Mammary epithelial cell (primary cell): ENCODE measurements at regions of chr12 and their contacts with region 1.

Region 1: DNA sequence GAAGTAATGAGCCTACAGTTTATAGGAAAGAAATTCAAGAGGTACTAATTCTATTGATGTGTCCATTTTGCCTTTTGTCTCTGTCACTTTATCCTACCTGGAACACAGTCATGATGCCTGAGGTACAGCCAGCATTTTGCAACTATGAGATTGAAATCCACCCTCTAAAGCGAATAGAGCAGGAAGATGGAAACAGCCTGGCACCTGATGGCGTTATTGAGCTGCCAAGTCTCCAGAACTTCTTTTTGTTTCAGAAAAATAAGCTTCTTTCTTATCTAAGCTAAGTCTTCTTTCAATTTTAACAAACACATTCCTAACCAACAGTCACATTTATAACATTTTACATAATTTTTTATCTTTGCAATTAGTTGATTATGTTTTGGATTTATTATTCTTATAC is 182.2 kb downstream of the PAWR start:
- DNase-seq: no peak
- H3K4me3 ChIP-seq: no peak overlapping the region
- H3K27ac ChIP-seq: no peak overlapping the region
- H3K4me1 ChIP-seq: no peaks in the 10 kb centered on the region
- H3K27me3 ChIP-seq: no peaks in the 10 kb centered on the region
- CTCF ChIP-seq: peak in 1 of 2 donors; percentile 15

Region 2: DNA sequence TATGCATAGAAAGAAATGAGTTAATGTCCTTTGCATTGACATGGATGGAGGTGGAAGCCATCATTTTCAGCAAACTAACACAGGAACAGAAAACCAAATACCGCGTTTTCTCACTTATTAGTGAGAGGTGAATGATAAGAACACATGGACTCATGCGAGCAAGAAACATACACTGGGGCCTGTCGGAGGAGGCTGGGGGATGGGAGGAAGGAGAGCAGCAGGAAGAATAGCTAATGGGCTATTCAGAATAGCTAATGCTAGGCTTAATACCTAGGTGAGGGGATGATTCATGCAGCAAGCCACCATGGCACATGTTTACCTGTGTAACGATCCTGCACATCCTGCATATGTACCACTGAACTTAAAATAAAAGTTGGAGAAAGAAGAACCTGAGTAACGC is 673.1 kb before region 1 on chr12:
- CTCF ChIA-PET with region 1: no interaction called
- dilution Hi-C with region 1: no loop called
- in situ Hi-C with region 1: no loop called
- intact Hi-C with region 1: no loop called
- DNase-seq: no peak
- H3K4me3 ChIP-seq: no peak overlapping the region
- H3K27ac ChIP-seq: no peak overlapping the region
- H3K4me1 ChIP-seq: no peaks in the 10 kb centered on the region
- H3K27me3 ChIP-seq: no peaks in the 10 kb centered on the region
- CTCF ChIP-seq: no peak

Region 3: DNA sequence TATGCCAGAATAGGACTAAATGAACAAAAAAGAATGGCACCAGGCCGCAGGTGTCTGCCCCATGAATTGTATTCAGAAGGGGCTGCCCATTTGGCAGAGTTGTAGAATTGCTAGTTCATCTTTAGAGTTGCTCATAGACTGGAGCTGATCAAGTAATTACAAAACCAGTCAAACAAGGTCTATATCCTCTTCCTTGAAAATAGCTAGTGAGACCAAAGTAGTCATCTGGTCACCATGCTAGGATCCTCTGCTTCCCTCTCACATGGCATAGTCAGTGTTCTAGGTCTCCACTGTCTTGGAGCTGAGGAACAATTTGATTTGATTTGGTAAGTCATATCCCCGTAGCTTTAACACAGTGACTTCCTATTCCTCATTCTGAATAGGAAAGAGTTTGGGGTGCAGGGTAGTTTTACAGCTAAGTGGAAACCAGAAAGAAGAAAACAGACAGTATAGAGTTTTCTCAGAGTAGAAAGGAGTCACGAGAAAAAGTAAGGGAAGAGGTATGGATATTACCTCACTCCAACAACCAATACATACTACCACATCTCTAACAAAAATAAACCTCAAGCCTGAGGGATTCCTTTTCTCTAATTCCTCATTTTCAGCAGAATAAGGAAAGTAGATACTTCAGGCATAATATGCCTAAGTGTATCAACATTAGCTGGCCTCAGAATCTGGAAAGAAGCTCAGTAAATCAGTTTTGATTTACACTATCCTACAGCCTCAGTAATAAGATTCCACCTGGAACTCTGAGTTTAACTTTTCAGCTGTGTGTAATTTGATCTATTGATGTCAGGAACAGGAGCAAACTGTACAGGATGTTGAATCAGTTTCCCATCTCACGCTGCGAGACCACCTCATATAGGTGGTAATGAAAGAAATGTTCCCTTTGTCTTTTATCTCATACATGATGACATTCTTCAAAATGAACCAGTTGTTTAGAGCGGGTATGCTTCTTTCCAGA is 69.8 kb before region 1 on chr12:
- CTCF ChIA-PET with region 1: no interaction called
- dilution Hi-C with region 1: loop called (anchors 10 kb)
- in situ Hi-C with region 1: no loop called
- intact Hi-C with region 1: no loop called
- DNase-seq: no peak
- H3K4me3 ChIP-seq: no peak overlapping the region
- H3K27ac ChIP-seq: no peak overlapping the region
- H3K4me1 ChIP-seq: no peaks in the 10 kb centered on the region
- H3K27me3 ChIP-seq: no peaks in the 10 kb centered on the region
- CTCF ChIP-seq: no peak

Region 4: GRCh38 chr12:79566473-79567174 is 58.0 kb after region 1 on chr12:
- CTCF ChIA-PET with region 1: no interaction called
- dilution Hi-C with region 1: no loop called
- in situ Hi-C with region 1: no loop called
- intact Hi-C with region 1: no loop called
- DNase-seq: peak; percentile 24
- H3K4me3 ChIP-seq: no peak overlapping the region
- H3K27ac ChIP-seq: no peak overlapping the region
- H3K4me1 ChIP-seq: peaks cover 6% of the 10 kb centered on the region
- H3K27me3 ChIP-seq: no peaks in the 10 kb centered on the region
- CTCF ChIP-seq: no peak

Region 5: DNA sequence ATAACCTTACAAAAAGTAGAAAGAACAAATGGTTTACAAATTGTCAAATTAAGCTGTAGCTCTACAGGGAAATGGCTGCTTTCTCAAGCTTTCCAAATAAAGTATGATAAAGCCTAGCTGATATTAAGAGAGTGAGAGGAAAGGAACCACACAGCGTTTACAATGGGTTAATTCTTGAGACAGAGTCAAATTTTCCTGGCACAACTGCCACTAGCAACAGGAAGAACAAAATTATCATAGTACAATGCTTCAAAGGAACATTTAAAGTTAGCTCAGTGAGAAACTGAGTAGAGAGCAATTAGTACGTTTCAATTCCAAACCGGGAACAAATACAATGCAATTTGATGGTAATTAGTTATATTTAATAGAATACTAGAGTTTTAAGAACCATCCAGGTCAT is 310.2 kb after region 1 on chr12:
- CTCF ChIA-PET with region 1: no interaction called
- dilution Hi-C with region 1: no loop called
- in situ Hi-C with region 1: no loop called
- intact Hi-C with region 1: no loop called
- DNase-seq: no peak
- H3K4me3 ChIP-seq: no peak overlapping the region
- H3K27ac ChIP-seq: no peak overlapping the region
- H3K4me1 ChIP-seq: no peaks in the 10 kb centered on the region
- H3K27me3 ChIP-seq: no peaks in the 10 kb centered on the region
- CTCF ChIP-seq: no peak